PC-9 (cell line): ENCODE measurements at regions of chr12 and their contacts with region 1.

Region 1: DNA sequence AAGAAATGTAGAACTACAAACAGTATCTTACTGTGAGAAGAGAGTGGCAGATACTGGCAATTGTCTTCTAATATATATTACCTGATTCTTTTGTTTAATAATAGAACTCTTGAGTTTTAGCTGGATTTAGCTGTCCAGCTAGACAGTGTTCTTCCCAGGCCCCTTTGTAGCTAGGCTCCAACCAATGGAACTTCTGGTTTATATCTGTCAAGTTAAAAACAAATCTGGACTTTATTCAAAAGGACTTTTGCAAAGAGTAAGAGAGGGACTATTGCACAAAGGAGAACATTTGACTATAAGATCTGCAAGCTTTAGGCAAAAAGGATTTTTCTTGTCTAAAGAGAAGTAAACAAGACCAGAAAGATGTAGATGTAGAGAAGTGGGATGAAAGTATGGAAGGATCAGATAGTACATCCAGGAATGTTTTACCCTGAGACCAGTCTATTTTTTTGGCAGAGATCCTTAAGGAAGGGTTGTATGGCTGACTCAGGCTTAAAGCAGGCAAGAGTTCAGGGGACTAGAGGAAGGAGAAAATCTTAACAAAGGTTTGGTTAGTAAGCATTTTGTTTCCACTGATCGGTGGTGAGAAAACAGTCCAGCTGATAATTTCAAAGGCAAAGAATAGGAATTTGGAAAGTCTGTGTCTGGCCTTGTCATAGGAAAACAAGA is 111.1 kb upstream of the PLEKHA5 start:
- DNase-seq: peak in 1 of 2 experiments; percentile 46
- H3K4me3 ChIP-seq: no peak overlapping the region
- H3K27ac ChIP-seq: peak overlapping the region; percentile 76
- H3K4me1 ChIP-seq: peaks cover 32% of the 10 kb centered on the region
- H3K27me3 ChIP-seq: no peaks in the 10 kb centered on the region
- CTCF ChIP-seq: no peak

Region 2: GRCh38 chr12:19095756-19096480 is 77.5 kb after region 1 on chr12:
- CTCF ChIA-PET with region 1: no interaction called
- POLR2A ChIA-PET with region 1: interaction called, 14 read pairs
- intact Hi-C with region 1: no loop called
- DNase-seq: peak in 1 of 2 experiments; percentile 11
- H3K4me3 ChIP-seq: no peak overlapping the region
- H3K27ac ChIP-seq: no peak overlapping the region
- H3K4me1 ChIP-seq: peaks cover 13% of the 10 kb centered on the region
- H3K27me3 ChIP-seq: no peaks in the 10 kb centered on the region
- CTCF ChIP-seq: no peak